Breast epithelium (tissue), 4 donors: ENCODE measurements at regions of chr10 and their contacts with region 1.

Region 1: DNA sequence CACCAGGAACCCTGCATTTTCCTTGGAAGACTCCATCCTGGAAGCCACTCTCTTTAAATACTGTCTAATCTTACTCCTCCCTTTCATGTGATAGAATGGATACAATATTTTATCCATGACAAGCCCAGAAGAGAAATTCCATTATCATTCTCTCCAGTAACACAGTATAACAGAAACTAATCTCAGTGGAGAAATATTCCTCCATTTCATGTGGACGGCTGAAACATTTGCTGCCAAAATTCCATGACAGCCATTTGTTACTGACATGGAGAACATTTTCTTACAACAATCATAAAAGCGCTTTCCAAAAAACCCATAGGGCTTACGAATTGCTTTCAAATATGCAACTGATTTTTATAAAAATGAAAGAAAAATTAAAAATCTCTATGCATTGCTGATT is 392.8 kb upstream of the KLF6 start:
- DNase-seq: no peak
- H3K4me3 ChIP-seq: no peak overlapping the region
- H3K27ac ChIP-seq: no peak overlapping the region
- H3K4me1 ChIP-seq: no peaks in the 10 kb centered on the region
- H3K27me3 ChIP-seq: no peaks in the 10 kb centered on the region
- CTCF ChIP-seq: no peak
- POLR2A ChIP-seq: no peak

Region 2: GRCh38 chr10:4138146-4138721 is 39.6 kb before region 1 on chr10:
- intact Hi-C with region 1: loop called (anchors 2 kb)
- DNase-seq: no peak
- H3K4me3 ChIP-seq: no peak overlapping the region
- H3K27ac ChIP-seq: no peak overlapping the region
- H3K4me1 ChIP-seq: no peaks in the 10 kb centered on the region
- H3K27me3 ChIP-seq: no peaks in the 10 kb centered on the region
- CTCF ChIP-seq: no peak
- POLR2A ChIP-seq: no peak

Region 3: GRCh38 chr10:4283846-4284610 is 106.2 kb after region 1 on chr10:
- intact Hi-C with region 1: no loop called
- DNase-seq: peak in 1 of 2 donors; percentile 44
- H3K4me3 ChIP-seq: no peak overlapping the region
- H3K27ac ChIP-seq: peak overlapping the region; percentile 70 to 88
- H3K4me1 ChIP-seq: no peaks in the 10 kb centered on the region
- H3K27me3 ChIP-seq: no peaks in the 10 kb centered on the region
- CTCF ChIP-seq: no peak
- POLR2A ChIP-seq: peak; percentile 14